ENCODE measurements at regions of chrX and their contacts with region 1.

Region 1: DNA sequence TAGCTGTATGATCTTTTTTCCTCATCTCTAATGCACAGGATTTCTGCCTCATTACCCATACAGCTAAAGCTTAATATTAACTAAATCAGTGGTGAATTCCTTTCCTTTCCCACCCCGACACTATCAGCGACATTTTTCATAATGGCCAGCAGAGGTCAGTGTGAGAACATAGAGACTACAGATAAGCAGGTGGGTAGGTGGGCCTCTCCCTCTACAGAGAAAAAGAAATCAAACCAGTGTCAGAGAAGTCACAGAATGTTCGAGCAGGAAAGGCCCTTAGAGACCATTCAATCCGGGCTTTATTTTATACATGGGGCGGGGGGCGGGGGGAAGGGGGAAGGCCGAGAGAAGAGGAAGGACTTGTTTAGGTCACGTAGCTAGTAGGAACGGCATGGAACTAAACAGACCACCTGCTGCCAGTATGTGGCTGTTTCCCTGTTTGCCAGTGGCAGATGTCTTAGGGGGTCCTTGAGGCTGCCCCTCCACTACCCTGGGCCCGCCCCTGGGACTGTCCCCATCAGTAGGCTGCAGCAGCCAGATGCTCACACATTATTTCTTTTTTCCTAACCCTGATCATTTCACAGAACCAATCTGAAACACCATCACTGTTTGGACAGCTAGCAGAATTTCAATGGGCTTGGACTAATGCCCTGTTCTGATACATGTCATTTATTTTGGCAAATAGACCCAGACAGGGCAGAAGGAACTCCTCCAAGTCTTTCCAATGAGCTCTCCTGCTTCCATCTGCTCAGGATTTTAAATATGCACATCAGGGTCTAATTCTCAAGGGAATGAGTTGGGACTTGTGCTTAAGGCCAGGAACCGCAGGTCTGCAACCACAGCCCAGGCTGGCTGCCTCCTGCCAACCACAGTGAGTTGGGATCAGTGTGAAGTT is 133.4 kb downstream of the ATG4A start:
- DNase-seq: peak; percentile 42 to 46 (median 43)
- ATAC-seq: peak; percentile 76
- H3K4me3 ChIP-seq: no peak overlapping the region
- H3K27ac ChIP-seq: no peak overlapping the region
- H3K4me1 ChIP-seq: peaks cover 0 to 5% of the 10 kb centered on the region in 2 experiments; a peak in 2 of 5 replicates
- H3K27me3 ChIP-seq: no peaks in the 10 kb centered on the region; a peak in 1 of 5 replicates
- CTCF ChIP-seq: peak; percentile 41 to 58 (median 47); a peak in 4 of 6 replicates
- EP300 ChIP-seq: no peak
- POLR2A ChIP-seq: no peak
- RAD21 ChIP-seq: peak; percentile 33 to 56

Region 2: DNA sequence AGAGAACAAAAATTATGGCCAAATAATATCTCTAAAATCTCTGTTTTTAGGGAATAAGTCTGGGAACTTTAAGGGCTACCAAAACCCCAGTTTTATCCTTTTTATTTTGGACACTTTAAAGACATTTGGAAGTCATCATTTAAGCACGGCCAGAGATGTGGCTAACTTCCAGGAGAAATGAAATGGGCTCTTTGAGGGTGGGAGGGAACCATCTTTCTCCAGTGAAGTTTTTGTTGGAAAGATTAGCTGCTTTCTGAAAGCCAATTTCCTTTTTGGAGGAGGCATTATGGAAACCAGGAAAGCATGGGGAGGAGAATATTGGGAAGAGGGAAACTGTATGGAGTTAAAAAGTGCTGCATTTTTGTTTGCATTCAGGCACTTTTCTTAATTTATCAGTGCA is 175.3 kb before region 1 on chrX:
- CTCF ChIA-PET with region 1: no interaction called
- POLR2A ChIA-PET with region 1: no interaction called
- in situ Hi-C with region 1: no loop called
- intact Hi-C with region 1: no loop called
- DNase-seq: no peak
- ATAC-seq: no peak
- H3K4me3 ChIP-seq: no peak overlapping the region
- H3K27ac ChIP-seq: no peak overlapping the region
- H3K4me1 ChIP-seq: no peaks in the 10 kb centered on the region
- H3K27me3 ChIP-seq: peaks cover 0 to 6% of the 10 kb centered on the region in 2 experiments; a peak in 1 of 5 replicates
- CTCF ChIP-seq: no peak
- EP300 ChIP-seq: no peak
- POLR2A ChIP-seq: no peak
- RAD21 ChIP-seq: no peak

Region 3: DNA sequence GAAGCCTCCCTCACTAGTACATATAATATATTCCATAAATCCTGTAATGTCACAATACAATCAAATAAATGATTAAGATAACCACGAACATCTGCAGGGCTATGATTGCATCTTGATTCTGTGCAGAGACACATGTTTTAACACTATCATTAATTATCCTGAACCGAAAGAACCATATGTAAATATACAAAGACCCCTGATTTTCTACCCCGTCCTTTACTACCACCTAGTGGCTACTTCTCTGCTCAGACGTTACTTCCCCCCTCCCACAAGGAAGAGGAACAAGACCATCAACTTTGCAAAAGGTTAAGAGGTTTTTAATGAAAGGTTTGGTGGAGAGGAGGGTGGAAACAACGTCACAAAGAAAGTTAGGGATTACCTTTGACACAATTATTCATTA is 79.2 kb after region 1 on chrX:
- CTCF ChIA-PET with region 1: no interaction called
- POLR2A ChIA-PET with region 1: no interaction called
- in situ Hi-C with region 1: no loop called
- intact Hi-C with region 1: loop called (anchors 5 kb)
- DNase-seq: peak; percentile 13 to 21 (median 16)
- ATAC-seq: peak; percentile 63; the same call in 2 of the 3 replicates
- H3K4me3 ChIP-seq: no peak overlapping the region
- H3K27ac ChIP-seq: no peak overlapping the region
- H3K4me1 ChIP-seq: no peaks in the 10 kb centered on the region
- H3K27me3 ChIP-seq: no peaks in the 10 kb centered on the region
- CTCF ChIP-seq: peak; percentile 29 to 52 (median 47); a peak in 5 of 6 replicates
- EP300 ChIP-seq: no peak
- POLR2A ChIP-seq: no peak
- RAD21 ChIP-seq: peak in 1 of 2 experiments; percentile 53; a peak in 2 of 4 replicates

Region 4: DNA sequence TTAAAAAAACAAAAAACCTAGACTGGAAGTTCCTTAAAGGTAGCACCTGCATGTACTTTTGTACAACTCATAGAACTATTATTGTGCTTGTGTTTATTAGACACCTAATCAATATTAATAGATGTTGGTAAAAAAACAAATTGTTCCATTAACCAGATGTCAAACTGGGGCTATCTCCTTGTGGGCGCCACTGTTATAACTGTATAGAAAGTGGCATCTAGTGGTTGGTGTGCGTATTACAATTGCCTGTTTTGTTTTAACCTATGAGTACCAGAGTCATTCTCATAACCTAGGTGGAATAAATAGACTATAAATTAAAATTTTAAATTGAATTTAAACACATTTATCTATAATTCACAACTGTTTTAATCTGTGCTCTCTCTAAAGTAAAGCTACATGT is 312.0 kb after region 1 on chrX:
- CTCF ChIA-PET with region 1: interaction called, 3 read pairs
- POLR2A ChIA-PET with region 1: no interaction called
- in situ Hi-C with region 1: no loop called
- intact Hi-C with region 1: loop called (anchors 2 kb)
- DNase-seq: peak; percentile 15 to 44 (median 18)
- ATAC-seq: peak; percentile 84
- H3K4me3 ChIP-seq: no peak overlapping the region
- H3K27ac ChIP-seq: no peak overlapping the region
- H3K4me1 ChIP-seq: no peaks in the 10 kb centered on the region
- H3K27me3 ChIP-seq: no peaks in the 10 kb centered on the region
- CTCF ChIP-seq: peak; percentile 47 to 69 (median 58); a peak in 5 of 6 replicates
- EP300 ChIP-seq: no peak
- POLR2A ChIP-seq: no peak
- RAD21 ChIP-seq: peak; percentile 48 to 66

Measured in K562 (cell line).